ENCODE measurements at regions of chr14 and their contacts with region 1.

Region 1: DNA sequence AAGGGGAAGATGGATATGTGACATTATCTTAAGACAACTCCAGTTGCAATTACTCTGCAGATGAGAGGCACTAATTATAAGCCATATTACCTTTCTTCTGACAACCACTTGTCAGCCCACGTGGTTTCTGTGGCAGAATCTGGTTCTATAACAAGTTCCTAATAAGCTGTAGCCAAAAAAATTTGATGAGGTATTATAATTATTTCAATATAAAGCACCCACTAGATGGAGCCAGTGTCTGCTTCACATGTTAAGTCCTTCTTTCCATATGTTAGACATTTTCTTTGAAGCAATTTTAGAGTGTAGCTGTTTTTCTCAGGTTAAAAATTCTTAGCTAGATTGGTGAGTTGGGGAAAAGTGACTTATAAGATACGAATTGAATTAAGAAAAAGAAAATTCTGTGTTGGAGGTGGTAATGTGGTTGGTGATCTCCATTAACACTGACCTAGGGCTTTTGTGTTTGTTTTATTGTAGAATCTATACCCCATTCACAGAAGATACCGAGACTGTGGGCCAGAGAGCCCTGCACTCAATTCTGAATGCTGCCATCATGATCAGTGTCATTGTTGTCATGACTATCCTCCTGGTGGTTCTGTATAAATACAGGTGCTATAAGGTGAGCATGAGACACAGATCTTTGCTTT is 36.9 kb downstream of the PSEN1 start:
- DNase-seq: peak in 2 of 9 experiments; percentile 48 to 56
- ATAC-seq: peak; percentile 36
- H3K4me3 ChIP-seq: no peak overlapping the region
- H3K4me3 Mint-ChIP-seq: no peak overlapping the region
- H3K27ac ChIP-seq: no peak overlapping the region
- H3K27ac Mint-ChIP-seq: no peak overlapping the region
- H3K4me1 ChIP-seq: no peaks in the 10 kb centered on the region
- H3K4me1 Mint-ChIP-seq: no peaks in the 10 kb centered on the region
- H3K27me3 ChIP-seq: no peaks in the 10 kb centered on the region
- H3K27me3 Mint-ChIP-seq: no peaks in the 10 kb centered on the region
- CTCF ChIP-seq: peak; percentile 43

Region 2: GRCh38 chr14:73472185-73473114 is 299.2 kb after region 1 on chr14:
- CTCF ChIA-PET with region 1: interaction called, 6 read pairs
- POLR2A ChIA-PET with region 1: no interaction called
- intact Hi-C with region 1: loop called (anchors 1 kb)
- DNase-seq: peak in 2 of 9 experiments; percentile 67 to 74
- ATAC-seq: peak; percentile 86
- H3K4me3 ChIP-seq: no peak overlapping the region
- H3K4me3 Mint-ChIP-seq: no peak overlapping the region
- H3K27ac ChIP-seq: no peak overlapping the region
- H3K27ac Mint-ChIP-seq: no peak overlapping the region
- H3K4me1 ChIP-seq: no peaks in the 10 kb centered on the region
- H3K4me1 Mint-ChIP-seq: peaks cover 7% of the 10 kb centered on the region
- H3K27me3 ChIP-seq: no peaks in the 10 kb centered on the region
- H3K27me3 Mint-ChIP-seq: peaks cover 2% of the 10 kb centered on the region
- CTCF ChIP-seq: peak; percentile 71

Region 3: GRCh38 chr14:73633116-73634010 is 460.1 kb after region 1 on chr14:
- CTCF ChIA-PET with region 1: no interaction called
- POLR2A ChIA-PET with region 1: no interaction called
- intact Hi-C with region 1: loop called (anchors 1 to 10 kb)
- DNase-seq: peak; percentile 21 to 78 (median 60)
- ATAC-seq: peak; percentile 87
- H3K4me3 ChIP-seq: peak overlapping the region; percentile 56 to 59
- H3K4me3 Mint-ChIP-seq: peak overlapping the region; percentile 83
- H3K27ac ChIP-seq: no peak overlapping the region
- H3K27ac Mint-ChIP-seq: no peak overlapping the region
- H3K4me1 ChIP-seq: peaks cover 8% of the 10 kb centered on the region
- H3K4me1 Mint-ChIP-seq: peaks cover 6% of the 10 kb centered on the region
- H3K27me3 ChIP-seq: no peaks in the 10 kb centered on the region
- H3K27me3 Mint-ChIP-seq: peaks cover 8% of the 10 kb centered on the region
- CTCF ChIP-seq: peak; percentile 72

Measured in CD8-positive, alpha-beta T cell (primary cell).